Caco-2 (cell line): ENCODE measurements at regions of chr5 and their contacts with region 1.

Region 1: GRCh38 chr5:177027665-177028064 is 5.2 kb downstream of the ZNF346 start:
- DNase-seq: no peak
- H3K4me3 ChIP-seq: no peak overlapping the region
- H3K4me3 Mint-ChIP-seq: no peak overlapping the region
- H3K27ac Mint-ChIP-seq: no peak overlapping the region
- H3K4me1 ChIP-seq: 0 out of 2 replicates have a peak, but pooled peaks cover 4% of the 10 kb centered on the region
- H3K4me1 Mint-ChIP-seq: peaks cover 12% of the 10 kb centered on the region
- H3K27me3 ChIP-seq: no peaks in the 10 kb centered on the region
- H3K27me3 Mint-ChIP-seq: no peaks in the 10 kb centered on the region
- CTCF ChIP-seq: no peak

Region 2: DNA sequence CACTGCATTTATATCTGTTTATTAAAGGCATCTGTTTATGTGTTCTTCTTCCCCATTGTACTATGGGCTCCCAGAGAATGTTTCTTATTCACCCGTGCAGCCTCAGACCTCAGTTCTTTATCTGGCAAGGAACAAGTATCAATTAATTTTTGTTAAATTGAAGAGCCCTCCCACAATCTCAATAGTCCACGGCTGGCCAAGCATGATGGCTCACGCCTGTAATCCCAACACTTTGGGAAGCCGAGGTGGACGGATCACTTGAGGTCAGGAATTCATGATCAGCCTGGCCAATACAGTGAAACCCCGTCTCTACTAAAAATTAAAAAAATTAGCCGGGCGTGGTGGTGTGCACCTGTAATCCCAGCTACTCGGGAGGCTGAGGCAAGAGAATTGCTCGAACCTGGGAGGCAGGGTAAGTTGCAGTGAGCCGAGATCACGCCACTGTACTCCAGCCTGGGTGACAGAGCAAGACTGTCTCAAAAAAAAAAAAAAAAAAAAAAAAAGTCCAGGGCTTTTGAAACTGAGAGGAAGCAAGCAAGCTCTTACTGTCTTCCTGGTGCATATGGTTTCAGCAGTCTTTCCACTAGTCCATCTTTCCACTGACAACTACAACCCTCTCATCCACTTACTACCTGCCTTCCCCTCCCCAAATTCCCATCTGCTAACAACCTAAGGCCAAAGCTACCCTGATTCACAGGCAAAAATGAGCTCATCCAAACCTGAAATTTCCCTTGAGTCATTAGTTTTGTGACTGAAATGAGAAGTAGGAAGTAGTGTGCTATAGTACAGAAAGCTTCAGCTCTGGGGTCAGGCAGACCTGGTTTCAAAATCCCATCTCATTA is 126.2 kb before region 1 on chr5:
- CTCF ChIA-PET with region 1: no interaction called
- POLR2A ChIA-PET with region 1: no interaction called
- intact Hi-C with region 1: no loop called
- DNase-seq: no peak
- H3K4me3 ChIP-seq: no peak overlapping the region
- H3K4me3 Mint-ChIP-seq: no peak overlapping the region
- H3K27ac Mint-ChIP-seq: no peak overlapping the region
- H3K4me1 ChIP-seq: no peaks in the 10 kb centered on the region
- H3K4me1 Mint-ChIP-seq: no peaks in the 10 kb centered on the region
- H3K27me3 ChIP-seq: no peaks in the 10 kb centered on the region
- H3K27me3 Mint-ChIP-seq: no peaks in the 10 kb centered on the region
- CTCF ChIP-seq: no peak

Region 3: DNA sequence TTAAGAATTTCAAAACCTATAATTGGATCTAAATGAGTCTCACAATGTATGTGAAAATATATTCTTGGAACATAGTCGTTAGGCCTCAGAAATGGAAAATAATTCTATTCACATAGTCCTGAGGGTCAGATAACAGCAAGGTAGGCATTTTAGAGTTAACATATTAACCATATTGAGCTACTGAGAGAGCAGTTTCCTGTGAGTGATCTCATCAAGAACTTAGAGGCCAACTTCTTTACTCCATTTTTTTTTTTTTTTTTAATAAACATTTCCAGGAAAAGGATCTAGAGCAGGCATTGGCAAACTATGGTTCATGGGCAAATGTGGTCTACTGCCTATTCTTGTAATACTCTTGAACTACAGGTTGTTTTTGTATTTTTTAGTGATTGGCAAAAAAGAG is 249.2 kb after region 1 on chr5:
- CTCF ChIA-PET with region 1: no interaction called
- POLR2A ChIA-PET with region 1: interaction called, 10 read pairs
- intact Hi-C with region 1: no loop called
- DNase-seq: no peak
- H3K4me3 ChIP-seq: no peak overlapping the region
- H3K4me3 Mint-ChIP-seq: no peak overlapping the region
- H3K27ac Mint-ChIP-seq: no peak overlapping the region
- H3K4me1 ChIP-seq: no peaks in the 10 kb centered on the region
- H3K4me1 Mint-ChIP-seq: no peaks in the 10 kb centered on the region
- H3K27me3 ChIP-seq: no peaks in the 10 kb centered on the region
- H3K27me3 Mint-ChIP-seq: no peaks in the 10 kb centered on the region
- CTCF ChIP-seq: no peak